ENCODE measurements at regions of chr13 and their contacts with region 1.

Region 1: GRCh38 chr13:20160847-20161274 is at the start of gene GJA3:
- DNase-seq: peak; percentile 65
- H3K4me3 Mint-ChIP-seq: peak within 1 kb of the TSS; percentile 74
- H3K27ac Mint-ChIP-seq: no peak within 1 kb of the TSS
- H3K4me1 Mint-ChIP-seq: no peaks in the 10 kb centered on the region
- H3K27me3 Mint-ChIP-seq: no peaks in the 10 kb centered on the region
- CTCF ChIP-seq: no peak
- total RNA-seq, gene GJA3: 3.9 and 4.3 TPM in 2 replicates

Region 2: GRCh38 chr13:19927117-19927748 is 233.6 kb before region 1 on chr13:
- CTCF ChIA-PET with region 1: no interaction called
- intact Hi-C with region 1: loop called (anchors 5 kb)
- DNase-seq: no peak
- H3K4me3 Mint-ChIP-seq: no peak overlapping the region
- H3K27ac Mint-ChIP-seq: no peak overlapping the region
- H3K4me1 Mint-ChIP-seq: peaks cover 8% of the 10 kb centered on the region
- H3K27me3 Mint-ChIP-seq: no peaks in the 10 kb centered on the region
- CTCF ChIP-seq: no peak

Region 3: GRCh38 chr13:19984430-19985218 is 176.2 kb before region 1 on chr13:
- CTCF ChIA-PET with region 1: no interaction called
- intact Hi-C with region 1: loop called (anchors 1 kb)
- DNase-seq: no peak
- H3K4me3 Mint-ChIP-seq: no peak overlapping the region
- H3K27ac Mint-ChIP-seq: no peak overlapping the region
- H3K4me1 Mint-ChIP-seq: no peaks in the 10 kb centered on the region
- H3K27me3 Mint-ChIP-seq: no peaks in the 10 kb centered on the region
- CTCF ChIP-seq: no peak

Region 4: DNA sequence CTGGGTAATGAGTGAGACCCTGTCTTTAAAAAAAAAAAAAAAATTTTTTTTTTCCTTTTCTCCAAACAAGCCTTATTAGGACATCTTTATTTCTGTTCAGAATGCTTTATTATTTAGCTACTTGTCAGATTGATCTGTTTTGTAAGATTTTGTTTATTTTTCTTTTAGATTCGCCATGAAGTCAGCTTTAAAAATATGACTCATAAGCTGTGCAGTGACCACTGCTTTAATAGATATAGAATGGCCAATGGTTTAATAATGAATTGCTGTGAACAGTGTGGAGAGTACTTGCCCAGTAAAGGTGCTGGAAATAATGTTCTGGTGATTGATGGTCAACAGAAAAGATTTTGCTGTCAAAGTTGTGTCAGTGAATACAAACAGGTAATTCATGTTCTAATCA is 154.7 kb before region 1 on chr13:
- CTCF ChIA-PET with region 1: no interaction called
- intact Hi-C with region 1: no loop called
- DNase-seq: no peak
- H3K4me3 Mint-ChIP-seq: no peak overlapping the region
- H3K27ac Mint-ChIP-seq: no peak overlapping the region
- H3K4me1 Mint-ChIP-seq: no peaks in the 10 kb centered on the region
- H3K27me3 Mint-ChIP-seq: no peaks in the 10 kb centered on the region
- CTCF ChIP-seq: no peak

Region 5: DNA sequence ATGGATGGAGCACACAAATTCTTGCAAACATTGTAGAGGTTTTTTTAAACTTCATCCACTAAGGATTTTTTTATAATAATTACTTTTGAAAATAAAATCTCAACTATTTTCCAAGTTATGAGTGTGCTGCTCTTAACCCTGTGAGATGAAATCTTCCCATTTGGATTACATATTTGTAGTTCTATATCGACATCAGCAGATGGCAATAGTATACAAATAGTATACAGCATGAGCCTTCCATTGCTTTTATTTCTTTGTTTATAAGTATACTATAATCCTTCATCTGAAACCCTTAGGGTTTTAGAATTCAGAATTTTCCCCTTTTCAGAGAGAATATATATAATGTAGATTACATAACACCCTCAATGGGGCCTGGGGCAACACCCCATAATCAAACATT is 70.5 kb before region 1 on chr13:
- CTCF ChIA-PET with region 1: no interaction called
- intact Hi-C with region 1: loop called (anchors 1 kb)
- DNase-seq: no peak
- H3K4me3 Mint-ChIP-seq: no peak overlapping the region
- H3K27ac Mint-ChIP-seq: no peak overlapping the region
- H3K4me1 Mint-ChIP-seq: no peaks in the 10 kb centered on the region
- H3K27me3 Mint-ChIP-seq: no peaks in the 10 kb centered on the region
- CTCF ChIP-seq: no peak

Region 6: GRCh38 chr13:20127577-20128466 is 33.0 kb before region 1 on chr13:
- CTCF ChIA-PET with region 1: interaction called, 3 read pairs
- intact Hi-C with region 1: loop called (anchors 5 kb)
- DNase-seq: peak; percentile 64
- H3K4me3 Mint-ChIP-seq: peak overlapping the region; percentile 67
- H3K27ac Mint-ChIP-seq: peak overlapping the region; percentile 29
- H3K4me1 Mint-ChIP-seq: peaks cover 16% of the 10 kb centered on the region
- H3K27me3 Mint-ChIP-seq: no peaks in the 10 kb centered on the region
- CTCF ChIP-seq: peak; percentile 10

Measured in Calu3 (cell line).